Calu3 (cell line): ENCODE measurements at regions of chr3 and their contacts with region 1.

Region 1: DNA sequence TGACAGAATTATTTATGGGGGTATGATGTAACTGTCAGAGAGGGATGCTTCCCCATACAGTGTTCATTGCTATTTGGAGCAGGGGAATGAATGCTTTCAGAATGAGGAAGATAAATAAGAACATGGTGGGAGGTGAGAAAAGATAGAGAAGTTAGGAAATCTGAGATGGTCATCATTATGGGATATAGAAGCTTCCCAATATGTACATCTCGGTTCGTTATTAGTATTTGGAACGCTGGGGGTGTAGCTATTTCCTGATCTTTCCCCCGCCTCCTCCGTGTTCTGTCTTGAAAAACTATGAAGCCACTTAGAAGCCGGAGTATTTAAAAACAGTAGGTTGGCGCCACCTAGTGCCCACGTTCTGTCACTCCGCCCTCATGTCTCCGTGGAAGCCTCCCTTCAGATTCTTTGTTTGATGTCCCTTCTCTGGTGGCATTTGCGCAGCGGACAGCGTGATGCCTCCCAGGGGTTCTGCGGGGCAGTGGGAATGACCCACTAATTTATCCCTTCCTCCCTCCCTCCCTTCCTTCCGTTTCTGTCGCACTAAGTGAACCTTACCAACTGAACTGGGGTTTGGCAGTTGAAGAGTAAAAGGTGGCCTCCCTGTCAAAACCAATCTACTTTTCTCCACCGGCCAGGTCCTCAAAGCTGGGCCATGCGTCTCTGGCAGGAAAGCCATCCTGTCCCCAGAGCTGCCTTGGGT is 184.5 kb downstream of the FEZF2 start:
- DNase-seq: peak; percentile 64
- H3K4me3 Mint-ChIP-seq: peak overlapping the region; percentile 37
- H3K27ac Mint-ChIP-seq: no peak overlapping the region
- H3K4me1 Mint-ChIP-seq: no peaks in the 10 kb centered on the region
- H3K27me3 Mint-ChIP-seq: no peaks in the 10 kb centered on the region
- CTCF ChIP-seq: peak; percentile 34

Region 2: GRCh38 chr3:61858056-61858455 is 330.8 kb before region 1 on chr3:
- CTCF ChIA-PET with region 1: no interaction called
- intact Hi-C with region 1: loop called (anchors 1 kb)
- DNase-seq: no peak
- H3K4me3 Mint-ChIP-seq: no peak overlapping the region
- H3K27ac Mint-ChIP-seq: no peak overlapping the region
- H3K4me1 Mint-ChIP-seq: no peaks in the 10 kb centered on the region
- H3K27me3 Mint-ChIP-seq: no peaks in the 10 kb centered on the region
- CTCF ChIP-seq: no peak

Region 3: DNA sequence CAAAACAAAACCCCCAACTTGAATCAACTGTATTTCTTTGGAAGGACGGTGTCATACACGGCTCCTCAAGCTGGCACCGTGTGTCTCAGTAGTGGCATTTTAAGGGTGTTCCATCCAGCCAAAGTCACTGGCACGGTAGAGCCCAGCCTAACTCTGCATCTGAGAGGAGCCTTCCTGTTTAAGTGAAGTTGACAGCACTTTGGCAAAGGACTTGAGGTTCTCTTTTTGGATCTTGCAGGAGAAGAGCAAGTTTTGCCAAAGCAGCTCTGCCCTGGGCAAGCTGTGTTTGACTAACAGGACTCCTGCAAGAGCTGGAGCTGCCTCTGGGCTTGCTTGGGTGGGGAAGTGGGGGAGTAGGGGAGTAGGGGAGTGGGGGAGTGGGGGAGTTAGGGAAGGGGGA is 294.1 kb after region 1 on chr3:
- CTCF ChIA-PET with region 1: no interaction called
- intact Hi-C with region 1: no loop called
- DNase-seq: no peak
- H3K4me3 Mint-ChIP-seq: no peak overlapping the region
- H3K27ac Mint-ChIP-seq: no peak overlapping the region
- H3K4me1 Mint-ChIP-seq: no peaks in the 10 kb centered on the region
- H3K27me3 Mint-ChIP-seq: no peaks in the 10 kb centered on the region
- CTCF ChIP-seq: no peak